ENCODE measurements at regions of chr7 and their contacts with region 1.

Region 1: DNA sequence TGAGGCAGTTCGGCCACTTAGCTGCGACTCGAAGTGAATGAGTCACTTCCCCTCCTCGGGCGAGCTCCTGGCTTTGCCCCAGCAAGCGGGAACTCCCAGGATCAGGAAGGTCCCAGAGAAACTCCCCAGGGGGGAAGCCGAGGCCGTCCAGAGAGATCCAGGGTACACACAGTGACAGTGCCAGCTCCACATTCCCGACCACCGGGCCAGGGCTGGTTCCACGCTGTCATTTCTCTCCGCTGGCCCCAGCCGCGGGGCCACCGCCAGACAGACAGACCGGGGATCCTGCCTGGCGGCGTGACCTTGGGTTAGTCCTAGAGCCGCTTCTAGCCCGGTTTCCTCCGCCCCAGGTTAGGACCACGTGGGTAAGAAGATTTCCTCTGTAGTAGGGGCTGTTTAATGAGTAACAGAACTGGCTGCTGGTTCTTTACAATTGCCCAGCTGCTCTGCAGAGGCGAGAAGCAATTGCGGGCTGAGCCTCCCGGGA is 463 bp upstream of the UPP1 start:
- DNase-seq: peak; percentile 89 to 95 (median 92)
- ATAC-seq: peak; percentile 73 to 84 (median 79)
- H3K4me3 ChIP-seq: peak overlapping the region; percentile 65 to 93 (median 78)
- H3K27ac ChIP-seq: peak overlapping the region; percentile 89 to 99 (median 93)
- H3K4me1 ChIP-seq: peaks cover 3 to 79% (median 22%) of the 10 kb centered on the region in 12 donors
- H3K27me3 ChIP-seq: no peaks in the 10 kb centered on the region
- CTCF ChIP-seq: no peak
- POLR2A ChIP-seq: no peak

Region 2: DNA sequence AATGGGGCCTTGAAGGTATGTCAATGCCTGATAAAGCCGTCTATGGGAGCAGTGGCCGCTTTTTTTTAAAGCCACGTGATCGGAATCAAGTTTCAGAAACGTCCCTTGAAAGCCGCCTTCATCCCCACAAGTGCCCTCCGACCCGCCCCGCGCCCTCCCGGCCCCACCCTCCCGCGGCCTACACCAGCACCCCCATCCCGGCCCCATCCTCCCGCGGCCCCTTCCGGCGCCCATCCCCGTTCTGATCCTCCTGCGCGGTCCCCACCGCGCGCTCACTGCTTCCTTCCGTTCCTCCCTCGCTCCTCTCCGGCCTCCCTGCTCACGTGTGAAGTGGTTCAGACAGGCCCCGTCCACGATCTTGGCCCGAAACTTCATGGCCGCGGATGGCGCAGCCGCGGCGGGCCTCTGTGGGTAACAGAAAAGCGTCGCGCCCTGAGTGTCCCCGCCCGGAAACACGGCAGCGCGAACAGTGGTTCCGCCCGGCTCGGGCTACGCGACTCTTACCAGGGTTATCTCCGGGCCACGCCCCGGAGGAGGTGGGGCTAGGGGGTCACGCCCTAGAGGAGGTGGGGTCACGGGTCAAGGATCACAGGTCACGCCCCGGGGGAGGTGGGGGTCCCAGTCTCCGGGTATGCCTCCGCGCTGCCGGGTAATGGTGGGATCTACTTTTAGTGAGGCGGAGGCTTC is 109.3 kb before region 1 on chr7 and contains the start of gene HUS1:
- intact Hi-C with region 1: loop called in 3 of 10 experiments (anchors 5 kb)
- DNase-seq: peak; percentile 88 to 96 (median 95)
- ATAC-seq: peak; percentile 97 to 100 (median 99)
- H3K4me3 ChIP-seq: peak within 1 kb of the TSS; percentile 61 to 90 (median 70)
- H3K27ac ChIP-seq: peak within 1 kb of the TSS; percentile 67 to 90 (median 86)
- H3K4me1 ChIP-seq: peaks cover 3 to 20% (median 12%) of the 10 kb centered on the region in 12 donors
- H3K27me3 ChIP-seq: no peaks in the 10 kb centered on the region
- CTCF ChIP-seq: peak in 1 of 12 donors; percentile 21
- POLR2A ChIP-seq: peak in 1 of 2 donors; percentile 77
- total RNA-seq, gene HUS1: 21.9 to 43.3 (median 27.5) TPM

Region 3: GRCh38 chr7:47991741-47992311 is 96.8 kb before region 1 on chr7:
- intact Hi-C with region 1: loop called in 1 of 10 experiments (anchors 5 kb)
- DNase-seq: peak; percentile 87 to 95 (median 90)
- ATAC-seq: peak; percentile 97 to 100 (median 99)
- H3K4me3 ChIP-seq: peak overlapping the region; percentile 15 to 64 (median 60)
- H3K27ac ChIP-seq: peak overlapping the region in 10 of 12 donors; percentile 28 to 76 (median 53)
- H3K4me1 ChIP-seq: peaks cover 0 to 14% (median 0%) of the 10 kb centered on the region in 12 donors
- H3K27me3 ChIP-seq: no peaks in the 10 kb centered on the region
- CTCF ChIP-seq: peak; percentile 36 to 91 (median 66)
- POLR2A ChIP-seq: no peak

Region 4: GRCh38 chr7:48035301-48035966 is 53.2 kb before region 1 on chr7 and contains the start of gene C7orf57:
- intact Hi-C with region 1: loop called in 7 of 10 experiments (anchors 2 to 5 kb)
- DNase-seq: peak; percentile 93 to 97 (median 95)
- ATAC-seq: peak; percentile 99 to 100 (median 100)
- H3K4me3 ChIP-seq: peak within 1 kb of the TSS; percentile 47 to 70 (median 61)
- H3K27ac ChIP-seq: no peak within 1 kb of the TSS
- H3K4me1 ChIP-seq: peaks cover 0 to 15% (median 10%) of the 10 kb centered on the region in 12 donors
- H3K27me3 ChIP-seq: peaks cover 0 to 34% (median 6%) of the 10 kb centered on the region in 9 donors
- CTCF ChIP-seq: peak in 8 of 12 donors; percentile 8 to 57 (median 39)
- POLR2A ChIP-seq: no peak
- total RNA-seq, gene C7orf57: 0.27 TPM in 1 of 9 donors, not detected in the others

Region 5: DNA sequence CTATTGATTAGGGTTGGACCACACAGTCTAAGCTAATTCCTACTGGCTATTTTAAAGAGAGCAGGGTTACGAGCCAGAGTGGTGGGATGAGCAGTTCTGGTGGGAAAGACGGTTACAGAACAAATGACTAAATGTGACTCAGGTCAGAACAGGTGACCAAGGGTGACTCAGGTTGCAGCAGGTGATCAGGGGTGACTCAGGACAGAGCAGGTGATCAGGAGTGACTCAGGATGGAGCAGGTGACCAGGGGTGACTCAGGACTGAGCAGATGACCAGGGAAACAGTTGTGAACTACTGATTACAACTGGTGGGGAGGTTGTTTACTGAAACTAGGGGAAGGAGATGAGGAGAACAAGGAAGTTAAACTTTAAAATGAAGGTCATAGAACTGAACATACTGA is 449.0 kb after region 1 on chr7:
- intact Hi-C with region 1: no loop called
- DNase-seq: no peak
- ATAC-seq: no peak
- H3K4me3 ChIP-seq: no peak overlapping the region
- H3K27ac ChIP-seq: no peak overlapping the region
- H3K4me1 ChIP-seq: no peaks in the 10 kb centered on the region
- H3K27me3 ChIP-seq: no peaks in the 10 kb centered on the region
- CTCF ChIP-seq: no peak
- POLR2A ChIP-seq: no peak

Measured in heart left ventricle (tissue), 16 donors.